ENCODE measurements at regions of chr5 and their contacts with region 1.

Region 1: DNA sequence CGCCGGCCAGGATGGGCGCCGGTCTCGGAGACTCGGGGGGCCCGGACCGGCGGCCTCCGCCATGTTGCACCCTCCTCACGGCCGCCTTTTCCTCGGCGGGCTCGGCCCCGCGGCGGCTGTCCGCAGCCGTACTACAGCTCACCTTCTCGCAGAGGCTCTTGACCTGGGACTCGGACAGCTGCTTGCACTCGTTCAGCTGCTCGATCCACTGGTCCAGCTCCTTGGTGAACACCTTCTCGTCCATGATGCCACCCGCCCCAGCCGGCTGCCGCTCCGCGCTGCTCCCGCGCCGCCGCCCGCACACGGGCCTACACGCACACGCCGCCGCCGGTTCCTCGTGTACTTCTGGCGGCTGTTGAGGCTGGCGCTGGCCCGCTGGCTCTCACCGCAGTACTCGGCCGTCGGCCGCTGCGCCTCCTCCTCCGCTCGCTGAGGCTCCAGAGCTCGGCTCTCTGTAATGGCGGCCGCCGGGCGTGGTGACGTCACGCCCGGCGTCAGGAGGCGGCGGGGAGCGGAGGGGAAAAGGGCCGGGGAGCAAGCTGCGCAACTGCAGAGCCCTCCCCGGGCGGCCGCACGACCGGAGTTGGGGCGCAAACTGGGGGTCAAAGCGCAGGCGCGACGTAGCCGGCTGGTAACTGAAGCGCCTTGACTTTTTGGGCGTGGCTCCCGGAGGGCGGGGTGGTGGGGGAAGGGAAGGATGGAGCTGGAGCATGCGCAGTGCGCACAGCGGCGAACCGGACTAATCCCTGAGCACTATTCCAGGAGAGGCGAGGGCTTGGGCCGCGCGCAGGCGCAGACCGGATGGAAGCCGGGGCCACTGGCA is at the start of gene PPP2CA:
- DNase-seq: peak; percentile 99
- H3K4me3 Mint-ChIP-seq: peak within 1 kb of the TSS; percentile 94
- H3K27ac Mint-ChIP-seq: peak within 1 kb of the TSS; percentile 97
- H3K4me1 Mint-ChIP-seq: peaks cover 46% of the 10 kb centered on the region
- H3K27me3 Mint-ChIP-seq: no peaks in the 10 kb centered on the region
- total RNA-seq, gene PPP2CA: 181 and 183 TPM in 2 replicates

Region 2: DNA sequence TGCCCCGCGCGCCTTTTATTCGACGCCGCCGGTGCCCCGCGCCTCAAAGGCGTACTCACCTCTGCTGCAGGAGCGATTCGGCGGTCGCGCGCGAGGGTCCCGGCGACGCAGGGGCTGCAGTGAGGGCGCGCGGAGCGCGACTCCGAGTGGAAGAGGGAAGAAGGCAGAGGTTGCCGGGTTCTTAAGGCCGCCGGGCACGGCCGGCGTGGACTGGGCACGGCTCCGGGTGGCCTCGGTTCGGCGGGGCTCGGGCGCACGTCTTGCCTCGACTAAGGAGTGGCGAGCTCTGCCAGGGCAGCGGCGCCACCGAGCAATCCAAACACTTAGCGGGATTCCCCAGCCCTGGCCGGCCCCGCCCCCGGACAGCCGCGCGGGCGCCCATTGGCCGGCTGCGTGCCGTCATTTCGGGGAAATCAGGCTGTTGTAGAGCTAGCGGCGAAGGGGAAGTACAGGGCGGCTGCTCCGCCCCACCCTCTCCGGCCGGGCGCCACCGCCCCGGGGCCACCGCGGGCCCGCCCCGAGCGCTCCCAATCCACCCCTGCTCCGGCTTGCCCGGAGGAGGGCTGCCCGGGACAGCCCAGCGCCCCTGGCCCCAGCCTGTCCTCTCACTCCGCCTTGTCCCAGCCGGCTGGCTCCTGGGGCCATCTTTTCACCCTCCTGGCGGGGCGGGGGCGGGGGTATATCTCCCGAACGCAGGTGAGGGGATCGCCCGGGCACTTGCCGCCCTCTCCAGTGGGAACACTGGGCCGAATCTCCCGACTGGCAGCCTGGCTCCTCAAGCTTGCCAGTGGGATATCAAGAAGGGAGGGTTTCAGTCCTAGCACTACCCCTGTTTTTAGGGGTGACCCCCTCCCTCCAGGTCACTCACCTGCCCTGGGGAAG is 1735.1 kb before region 1 on chr5 and contains the start of gene IRF1:
- intact Hi-C with region 1: loop called (anchors 5 kb)
- DNase-seq: peak; percentile 99
- H3K4me3 Mint-ChIP-seq: peak within 1 kb of the TSS; percentile 99
- H3K27ac Mint-ChIP-seq: peak within 1 kb of the TSS; percentile 95
- H3K4me1 Mint-ChIP-seq: peaks cover 76% of the 10 kb centered on the region
- H3K27me3 Mint-ChIP-seq: no peaks in the 10 kb centered on the region
- total RNA-seq, gene IRF1: 190 and 198 TPM in 2 replicates

Region 3: DNA sequence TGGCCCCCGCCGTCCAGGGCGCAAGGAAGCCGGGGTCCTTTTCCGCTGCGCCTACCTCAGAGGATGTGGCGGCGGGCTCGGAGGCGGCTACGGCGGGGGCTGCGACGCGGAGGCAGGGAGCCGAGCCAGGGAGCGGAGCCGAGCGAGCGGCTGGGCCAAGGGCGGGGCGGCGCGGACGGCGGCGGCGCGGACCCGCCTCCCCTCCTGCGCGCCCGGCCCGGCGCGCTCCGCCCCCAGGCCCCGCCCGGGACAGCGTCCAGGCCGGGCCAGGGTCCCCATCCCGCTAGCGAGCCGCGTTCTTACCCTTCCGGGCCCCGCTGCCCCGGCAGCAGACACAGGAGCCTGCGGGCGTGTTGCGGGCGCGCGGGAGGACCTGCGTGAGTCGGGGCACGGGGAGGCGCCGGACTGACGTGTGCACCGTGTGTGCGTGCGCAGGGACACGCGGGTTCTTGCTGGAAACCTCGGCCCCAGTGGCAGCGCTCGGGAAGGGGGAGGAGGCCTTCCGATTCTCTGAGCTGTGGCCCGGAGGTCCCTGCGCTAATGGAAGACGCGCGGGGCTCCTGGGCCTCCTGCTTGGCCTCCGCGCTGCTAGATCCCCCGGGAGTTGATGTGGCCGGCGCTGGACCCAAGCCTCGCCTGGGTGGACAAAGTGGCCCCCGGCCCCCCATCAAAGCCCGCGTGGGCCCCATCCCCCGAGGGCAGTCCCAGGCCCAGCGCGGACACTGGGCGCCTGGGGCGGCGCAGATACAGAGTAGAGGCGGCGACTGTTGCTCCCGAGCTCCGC is 221.0 kb before region 1 on chr5 and contains the start of gene VDAC1:
- intact Hi-C with region 1: loop called (anchors 1 kb)
- DNase-seq: peak; percentile 78
- H3K4me3 Mint-ChIP-seq: peak within 1 kb of the TSS; percentile 93
- H3K27ac Mint-ChIP-seq: peak within 1 kb of the TSS; percentile 97
- H3K4me1 Mint-ChIP-seq: peaks cover 53% of the 10 kb centered on the region
- H3K27me3 Mint-ChIP-seq: peaks cover 2% of the 10 kb centered on the region
- total RNA-seq, gene VDAC1: 440 and 442 TPM in 2 replicates

Region 4: GRCh38 chr5:134161513-134162395 is 64.1 kb before region 1 on chr5:
- intact Hi-C with region 1: no loop called
- DNase-seq: no peak
- H3K4me3 Mint-ChIP-seq: no peak overlapping the region
- H3K27ac Mint-ChIP-seq: peak overlapping the region; percentile 38
- H3K4me1 Mint-ChIP-seq: peaks cover 23% of the 10 kb centered on the region
- H3K27me3 Mint-ChIP-seq: no peaks in the 10 kb centered on the region

Region 5: DNA sequence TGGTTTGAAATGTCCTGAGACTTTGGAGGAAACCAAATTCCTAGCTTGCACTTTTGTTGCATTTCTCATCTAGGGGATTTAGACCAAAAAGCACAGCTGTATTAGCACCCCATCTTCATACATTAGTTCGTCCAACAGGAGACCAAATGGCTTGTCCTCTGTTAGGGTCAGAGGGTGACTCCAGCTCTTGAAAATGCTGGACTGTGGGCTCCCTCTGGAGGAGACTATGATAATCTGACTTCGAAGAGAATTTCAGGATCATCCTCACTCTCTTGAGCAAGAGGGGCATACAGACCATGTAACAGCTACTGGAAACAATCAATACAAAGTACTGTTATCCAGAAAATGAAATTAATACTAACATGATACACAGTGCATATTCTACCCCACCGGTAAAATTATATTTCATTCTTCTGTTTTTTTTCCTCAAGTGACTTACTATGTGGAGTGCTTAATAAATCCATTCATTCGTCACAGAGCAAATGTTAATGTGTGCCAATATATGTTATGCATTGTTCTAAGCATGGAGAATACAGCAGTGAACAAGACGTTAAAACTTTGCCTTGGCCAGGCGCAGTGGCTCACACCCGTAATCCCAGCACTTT is 63.8 kb after region 1 on chr5:
- intact Hi-C with region 1: loop called (anchors 2 kb)
- DNase-seq: peak; percentile 3
- H3K4me3 Mint-ChIP-seq: no peak overlapping the region
- H3K27ac Mint-ChIP-seq: no peak overlapping the region
- H3K4me1 Mint-ChIP-seq: no peaks in the 10 kb centered on the region
- H3K27me3 Mint-ChIP-seq: peaks cover 8% of the 10 kb centered on the region

Region 6: GRCh38 chr5:134609232-134609851 is 383.5 kb after region 1 on chr5:
- intact Hi-C with region 1: loop called (anchors 2 kb)
- DNase-seq: no peak
- H3K4me3 Mint-ChIP-seq: peak overlapping the region; percentile 67
- H3K27ac Mint-ChIP-seq: peak overlapping the region; percentile 96
- H3K4me1 Mint-ChIP-seq: peaks cover 48% of the 10 kb centered on the region
- H3K27me3 Mint-ChIP-seq: no peaks in the 10 kb centered on the region

Region 7: DNA sequence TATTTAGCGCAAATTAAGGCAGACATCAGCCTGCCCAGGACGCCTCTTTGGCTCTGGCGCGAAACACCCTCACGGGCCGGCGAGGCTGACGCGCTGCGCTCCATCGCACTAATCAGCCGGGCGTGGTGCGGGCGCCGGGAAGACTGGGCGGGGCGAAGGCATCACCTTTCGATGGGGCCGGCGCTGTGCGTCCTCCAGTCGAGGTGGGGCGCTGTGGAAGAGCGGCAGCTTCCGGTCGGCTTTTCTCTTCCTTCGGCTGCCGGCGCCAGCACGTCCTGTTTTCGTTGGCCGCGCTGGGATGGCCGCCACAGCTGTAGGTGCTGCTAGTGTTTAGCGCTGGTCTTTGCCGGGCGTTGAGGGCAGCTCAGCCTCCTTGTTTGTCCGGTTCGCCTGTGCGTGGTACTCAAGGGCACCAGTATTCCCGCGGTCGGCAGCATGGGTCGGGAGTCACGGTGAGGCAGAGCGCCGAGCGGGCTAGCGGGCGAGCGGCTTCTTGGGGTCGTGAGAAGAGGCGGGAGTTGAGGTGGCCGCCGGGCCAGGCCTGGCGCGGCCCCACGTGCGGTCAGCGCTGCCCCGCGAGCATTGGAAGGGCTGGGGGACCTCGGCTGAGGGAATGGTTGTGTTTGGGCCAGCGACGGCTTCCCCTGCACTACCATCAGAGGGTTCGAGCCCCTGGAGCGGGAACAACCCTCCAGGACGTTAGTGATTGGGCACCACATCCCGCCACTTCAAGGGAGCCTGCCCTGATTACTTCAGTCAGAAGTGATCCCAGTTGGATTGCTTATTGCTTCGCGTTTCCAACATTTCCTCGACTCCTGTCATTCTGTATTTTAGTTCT is 532.9 kb after region 1 on chr5 and contains the start of gene DDX46:
- intact Hi-C with region 1: loop called (anchors 1 kb)
- DNase-seq: peak; percentile 94
- H3K4me3 Mint-ChIP-seq: peak within 1 kb of the TSS; percentile 100
- H3K27ac Mint-ChIP-seq: peak within 1 kb of the TSS; percentile 99
- H3K4me1 Mint-ChIP-seq: peaks cover 28% of the 10 kb centered on the region
- H3K27me3 Mint-ChIP-seq: no peaks in the 10 kb centered on the region
- total RNA-seq, gene DDX46: 78.3 and 84.4 TPM in 2 replicates

Region 8: GRCh38 chr5:135371622-135372251 is 1145.9 kb after region 1 on chr5:
- intact Hi-C with region 1: no loop called
- DNase-seq: no peak
- H3K4me3 Mint-ChIP-seq: no peak overlapping the region
- H3K27ac Mint-ChIP-seq: peak overlapping the region; percentile 84
- H3K4me1 Mint-ChIP-seq: peaks cover 59% of the 10 kb centered on the region
- H3K27me3 Mint-ChIP-seq: no peaks in the 10 kb centered on the region